SK-N-SH (cell line): ENCODE measurements at regions of chr9 and their contacts with region 1.

Region 1: DNA sequence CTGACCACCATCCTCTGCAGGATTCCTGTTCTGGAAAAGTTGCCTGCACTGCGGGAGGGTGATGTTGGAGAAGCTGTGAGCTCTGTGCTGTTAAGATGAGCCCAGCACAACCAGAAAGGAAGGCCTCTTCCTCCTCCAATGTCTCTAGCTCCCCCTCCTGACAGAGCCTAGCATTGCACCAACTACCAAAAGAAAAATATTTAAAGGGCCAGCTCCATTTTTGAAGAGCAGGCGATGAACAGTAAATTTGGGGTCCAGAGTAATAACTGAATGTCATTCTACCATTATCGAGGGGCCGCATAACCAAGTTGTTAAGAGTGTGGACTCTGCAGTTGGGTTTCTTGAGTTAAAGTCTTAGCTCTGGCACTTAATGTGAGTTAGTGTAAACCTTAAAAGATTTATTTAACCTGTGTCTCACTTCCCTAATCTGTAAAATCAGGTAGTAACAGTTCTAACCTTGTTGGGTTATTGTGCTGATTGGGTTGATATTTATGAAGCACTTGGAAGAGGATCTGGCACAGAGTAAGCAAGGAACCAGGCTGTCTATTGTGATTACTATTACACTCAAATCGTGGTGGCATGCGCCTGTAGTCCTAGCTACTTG is 3.9 kb downstream of the TEX53 start:
- DNase-seq: peak; percentile 69
- H3K4me3 ChIP-seq: no peak overlapping the region; a peak in 1 of 4 replicates
- H3K27ac ChIP-seq: no peak overlapping the region
- H3K4me1 ChIP-seq: peaks cover 0 to 5% of the 10 kb centered on the region in 2 experiments; a peak in 2 of 4 replicates
- H3K27me3 ChIP-seq: no peaks in the 10 kb centered on the region
- CTCF ChIP-seq: peak; percentile 93
- EP300 ChIP-seq: no peak
- RAD21 ChIP-seq: peak; percentile 92

Region 2: GRCh38 chr9:114397848-114398605 is 255.6 kb before region 1 on chr9:
- CTCF ChIA-PET with region 1: interaction called, 15 read pairs
- POLR2A ChIA-PET with region 1: no interaction called
- DNase-seq: peak; percentile 99
- H3K4me3 ChIP-seq: peak overlapping the region; percentile 72 to 76
- H3K27ac ChIP-seq: no peak overlapping the region
- H3K4me1 ChIP-seq: peaks cover 0 to 22% of the 10 kb centered on the region in 2 experiments; a peak in 1 of 4 replicates
- H3K27me3 ChIP-seq: no peaks in the 10 kb centered on the region
- CTCF ChIP-seq: no peak
- EP300 ChIP-seq: no peak
- RAD21 ChIP-seq: no peak

Region 3: DNA sequence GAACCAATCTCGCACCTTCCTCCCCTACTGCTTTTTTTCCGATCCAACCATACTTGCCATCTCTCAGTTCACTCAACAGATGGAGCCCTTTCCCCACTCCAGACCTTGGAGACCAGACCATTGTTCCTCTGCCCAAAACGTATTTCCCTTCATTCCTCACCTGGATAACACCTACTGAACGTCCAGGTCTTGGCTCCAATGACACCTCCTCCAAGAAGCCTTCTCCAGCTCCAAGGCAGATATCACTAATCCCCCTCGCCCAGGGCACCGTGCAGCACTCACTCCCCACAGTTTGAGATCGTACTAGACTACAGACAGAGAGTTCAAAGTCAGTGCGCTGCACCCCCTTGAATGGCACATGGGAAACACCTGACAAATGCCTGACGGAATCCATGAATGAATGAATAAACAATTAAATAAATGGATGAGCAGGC is 218.8 kb before region 1 on chr9:
- CTCF ChIA-PET with region 1: interaction called, 72 read pairs
- POLR2A ChIA-PET with region 1: no interaction called
- DNase-seq: peak; percentile 64
- H3K4me3 ChIP-seq: no peak overlapping the region
- H3K27ac ChIP-seq: no peak overlapping the region
- H3K4me1 ChIP-seq: no peaks in the 10 kb centered on the region
- H3K27me3 ChIP-seq: no peaks in the 10 kb centered on the region; the same call in 1 of the 2 replicates
- CTCF ChIP-seq: peak; percentile 71
- EP300 ChIP-seq: no peak
- RAD21 ChIP-seq: peak; percentile 85

Region 4: GRCh38 chr9:114487607-114488300 is 165.9 kb before region 1 on chr9:
- CTCF ChIA-PET with region 1: interaction called, 21 read pairs
- POLR2A ChIA-PET with region 1: no interaction called
- DNase-seq: peak; percentile 75
- H3K4me3 ChIP-seq: no peak overlapping the region; a peak in 1 of 4 replicates
- H3K27ac ChIP-seq: no peak overlapping the region
- H3K4me1 ChIP-seq: peaks cover 5% of the 10 kb centered on the region in 2 experiments; a peak in 1 of 4 replicates
- H3K27me3 ChIP-seq: peaks cover 12% of the 10 kb centered on the region; the same call in 1 of the 2 replicates
- CTCF ChIP-seq: peak; percentile 84
- EP300 ChIP-seq: no peak
- RAD21 ChIP-seq: peak; percentile 74

Region 5: DNA sequence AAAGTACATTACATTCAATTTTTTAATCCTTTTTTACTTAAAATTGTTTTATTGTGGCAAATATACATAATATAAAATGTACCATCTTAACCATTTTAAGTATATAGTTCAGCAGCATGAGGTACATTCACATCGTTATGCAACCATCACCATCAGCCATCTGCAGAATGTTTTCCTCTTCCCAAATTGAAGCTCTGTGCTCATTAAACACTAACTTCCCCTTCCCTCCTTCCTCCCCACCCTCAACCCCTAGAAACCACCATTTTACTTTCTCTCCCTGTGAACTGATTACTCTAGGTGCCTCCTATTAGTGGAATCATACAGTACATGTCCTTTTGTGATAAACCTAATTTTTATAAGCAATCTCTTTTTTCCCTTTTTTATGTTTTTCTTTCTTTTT is 11.7 kb before region 1 on chr9:
- CTCF ChIA-PET with region 1: interaction called, 17 read pairs
- POLR2A ChIA-PET with region 1: no interaction called
- DNase-seq: no peak
- H3K4me3 ChIP-seq: no peak overlapping the region
- H3K27ac ChIP-seq: no peak overlapping the region
- H3K4me1 ChIP-seq: no peaks in the 10 kb centered on the region
- H3K27me3 ChIP-seq: no peaks in the 10 kb centered on the region
- CTCF ChIP-seq: no peak
- EP300 ChIP-seq: no peak
- RAD21 ChIP-seq: no peak

Region 6: GRCh38 chr9:114674798-114675540 is 21.3 kb after region 1 on chr9:
- CTCF ChIA-PET with region 1: interaction called, 10 read pairs
- POLR2A ChIA-PET with region 1: no interaction called
- DNase-seq: no peak
- H3K4me3 ChIP-seq: no peak overlapping the region
- H3K27ac ChIP-seq: no peak overlapping the region
- H3K4me1 ChIP-seq: peaks cover 0 to 15% of the 10 kb centered on the region in 2 experiments; a peak in 2 of 4 replicates
- H3K27me3 ChIP-seq: no peaks in the 10 kb centered on the region
- CTCF ChIP-seq: peak; percentile 14; the same call in 1 of the 2 replicates
- EP300 ChIP-seq: no peak
- RAD21 ChIP-seq: no peak

Region 7: DNA sequence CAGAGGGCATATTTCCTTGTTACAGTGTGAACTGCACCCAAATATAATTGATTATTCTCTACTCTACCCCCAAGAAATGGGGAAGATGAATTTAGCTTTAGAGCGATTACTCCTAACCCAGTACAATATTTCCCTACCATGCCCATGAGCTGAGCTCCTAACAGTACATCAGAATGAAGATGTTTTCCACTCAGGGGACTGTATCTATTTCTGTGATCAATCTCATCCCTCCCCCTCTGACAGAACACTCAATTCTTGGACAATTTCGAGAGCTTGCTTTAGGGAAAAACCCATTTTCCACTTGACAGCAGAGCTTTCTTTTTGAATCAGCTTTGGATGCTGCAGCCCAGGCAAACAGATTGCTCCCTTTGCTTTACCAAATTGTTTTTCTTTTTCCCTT is 53.1 kb after region 1 on chr9:
- CTCF ChIA-PET with region 1: no interaction called
- POLR2A ChIA-PET with region 1: no interaction called
- DNase-seq: no peak
- H3K4me3 ChIP-seq: no peak overlapping the region
- H3K27ac ChIP-seq: no peak overlapping the region
- H3K4me1 ChIP-seq: 0 out of 4 replicates have a peak, but pooled peaks cover 0 to 9% of the 10 kb centered on the region in 2 experiments
- H3K27me3 ChIP-seq: no peaks in the 10 kb centered on the region
- CTCF ChIP-seq: no peak
- EP300 ChIP-seq: no peak
- RAD21 ChIP-seq: no peak